ENCODE measurements at regions of chr5 and their contacts with region 1.

Region 1: DNA sequence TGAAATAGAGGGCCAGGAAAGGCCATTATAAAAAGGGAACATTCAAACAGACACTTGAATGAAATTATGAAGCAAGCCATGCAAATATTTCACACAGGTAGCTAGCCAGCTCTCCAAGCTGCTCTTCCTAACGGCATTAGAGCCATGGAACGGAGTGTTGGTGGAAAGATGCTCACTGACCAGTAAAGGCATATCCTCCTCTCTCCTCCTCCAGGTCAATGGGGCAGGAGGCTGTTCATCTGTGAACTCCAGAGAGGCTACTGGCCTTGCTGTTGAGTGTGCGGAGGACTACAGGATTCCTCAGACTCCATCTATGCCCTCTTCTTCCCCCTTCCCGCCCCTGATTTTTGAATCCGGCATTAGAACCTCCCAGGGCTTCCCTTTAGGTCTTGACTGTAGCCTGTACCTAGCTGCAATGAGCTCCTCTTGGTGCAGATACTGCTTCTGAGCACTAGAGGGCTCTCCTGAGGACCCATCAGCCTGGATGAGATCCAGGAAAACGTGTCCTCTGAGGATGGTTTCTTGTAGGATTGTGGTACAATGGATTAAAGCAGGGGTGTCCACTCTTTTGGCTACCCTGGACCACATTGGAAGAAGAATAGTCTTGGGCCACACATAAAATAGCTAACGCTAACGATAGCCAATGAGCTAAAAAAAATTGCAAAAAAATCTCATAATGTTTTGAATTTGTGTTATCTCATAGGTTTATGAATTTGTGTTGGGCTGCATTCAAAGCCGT is 162.2 kb downstream of the SREK1 start:
- DNase-seq: peak; percentile 13
- H3K4me3 ChIP-seq: no peak overlapping the region
- H3K27ac ChIP-seq: no peak overlapping the region
- H3K4me1 ChIP-seq: no peaks in the 10 kb centered on the region
- H3K27me3 ChIP-seq: peaks cover 8% of the 10 kb centered on the region
- CTCF ChIP-seq: peak; percentile 83 to 93 (median 88)

Region 2: DNA sequence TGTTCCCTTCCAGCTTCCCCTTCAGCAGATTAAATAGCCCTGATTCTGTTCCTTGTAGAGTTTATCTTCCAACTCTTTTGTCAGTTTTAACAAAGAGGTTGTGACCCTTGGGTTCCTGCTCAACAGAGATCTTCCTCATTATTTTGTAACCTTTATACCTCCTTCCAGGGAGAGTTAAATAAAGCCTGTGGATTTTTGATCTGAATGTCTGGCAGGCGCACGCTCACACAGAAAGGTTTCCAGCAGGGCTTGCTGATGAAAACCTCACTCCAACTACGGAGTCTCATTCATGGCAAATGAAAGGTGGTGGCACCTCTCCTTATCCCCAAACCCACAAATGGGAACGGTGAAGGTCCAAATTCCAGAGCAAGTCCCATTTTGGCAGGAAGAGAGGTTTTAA is 33.2 kb before region 1 on chr5:
- dilution Hi-C with region 1: no loop called
- DNase-seq: no peak
- H3K4me3 ChIP-seq: no peak overlapping the region
- H3K27ac ChIP-seq: no peak overlapping the region
- H3K4me1 ChIP-seq: no peaks in the 10 kb centered on the region
- H3K27me3 ChIP-seq: peaks cover 10% of the 10 kb centered on the region
- CTCF ChIP-seq: no peak

Region 3: GRCh38 chr5:66498791-66499207 is 192.5 kb after region 1 on chr5:
- dilution Hi-C with region 1: loop called (anchors 25 kb)
- DNase-seq: peak; percentile 66
- H3K4me3 ChIP-seq: no peak overlapping the region
- H3K27ac ChIP-seq: no peak overlapping the region
- H3K4me1 ChIP-seq: peaks cover 14% of the 10 kb centered on the region
- H3K27me3 ChIP-seq: no peaks in the 10 kb centered on the region
- CTCF ChIP-seq: peak; percentile 63 to 69 (median 65)

Region 4: GRCh38 chr5:66796305-66797292 is 490.3 kb after region 1 on chr5:
- dilution Hi-C with region 1: loop called (anchors 25 kb)
- DNase-seq: no peak
- H3K4me3 ChIP-seq: no peak overlapping the region
- H3K27ac ChIP-seq: no peak overlapping the region
- H3K4me1 ChIP-seq: no peaks in the 10 kb centered on the region
- H3K27me3 ChIP-seq: no peaks in the 10 kb centered on the region
- CTCF ChIP-seq: peak in 1 of 3 experiments; percentile 43

Measured in keratinocyte (primary cell).